ENCODE measurements at regions of chr19 and their contacts with region 1.

Region 1: DNA sequence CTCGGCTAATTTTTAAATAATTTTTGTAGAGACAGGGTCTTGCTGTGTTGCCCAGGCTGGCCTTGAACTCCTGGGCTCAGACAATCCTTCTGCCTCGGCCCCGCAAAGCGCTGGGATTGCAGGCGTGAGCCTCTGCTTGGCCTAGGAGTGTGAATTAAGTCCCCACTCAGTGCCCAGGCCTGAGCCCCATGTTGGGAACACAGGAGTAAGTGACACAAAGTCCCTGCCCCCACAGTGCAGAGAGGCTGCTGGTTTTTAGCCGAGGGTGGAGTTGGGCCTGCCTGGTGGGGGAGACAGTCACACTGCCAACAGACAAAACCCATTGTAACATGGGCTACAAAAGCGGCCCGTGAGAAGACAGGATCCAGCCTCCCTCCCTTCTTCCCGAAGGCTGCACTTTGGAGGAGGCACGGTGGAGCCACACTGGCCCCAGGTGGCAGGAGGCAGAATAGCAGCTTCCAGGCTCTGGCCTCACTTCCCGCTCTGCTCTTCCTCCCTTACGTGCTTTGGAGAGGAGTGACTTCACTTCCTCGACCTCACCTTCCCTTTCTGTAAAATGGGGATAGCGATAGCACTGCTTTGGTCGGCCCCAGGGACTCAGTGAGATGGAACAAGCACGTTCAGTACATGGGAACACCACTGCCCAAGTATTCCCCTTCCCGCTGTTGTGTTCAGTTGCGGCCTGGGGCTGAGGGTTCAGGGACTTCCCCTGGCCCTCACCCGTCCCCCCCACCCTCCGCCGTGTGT is 15.2 kb upstream of the EHD2 start:
- DNase-seq: peak; percentile 69 to 87 (median 77)
- ATAC-seq: peak; percentile 65 to 86 (median 84)
- H3K4me3 ChIP-seq: no peak overlapping the region
- H3K27ac ChIP-seq: peak overlapping the region in 6 of 12 donors; percentile 20 to 76 (median 43)
- H3K4me1 ChIP-seq: peaks cover 0 to 8% (median 4%) of the 10 kb centered on the region in 12 donors
- H3K27me3 ChIP-seq: no peaks in the 10 kb centered on the region
- CTCF ChIP-seq: peak; percentile 93 to 99 (median 97)
- POLR2A ChIP-seq: no peak

Region 2: DNA sequence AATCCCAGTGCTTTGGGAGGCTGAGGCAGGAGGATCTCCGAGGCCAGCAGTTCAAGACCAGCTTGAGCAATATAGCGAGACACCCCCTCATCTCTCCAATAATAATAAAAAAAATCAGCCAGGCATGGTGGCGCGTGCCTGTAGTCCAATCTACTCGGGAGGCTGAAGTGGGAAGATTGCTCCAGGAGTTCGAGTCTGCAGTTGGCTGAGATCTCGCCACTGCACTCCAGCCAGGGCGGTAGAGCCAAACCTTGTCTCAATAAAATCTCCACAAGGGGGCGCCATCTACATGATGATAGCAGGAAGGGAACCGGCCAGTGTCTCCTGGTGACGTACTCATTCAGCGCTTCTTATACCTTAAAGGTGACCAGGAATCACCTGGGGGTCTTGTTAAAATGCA is 402.0 kb before region 1 on chr19:
- intact Hi-C with region 1: loop called in 3 of 10 experiments (anchors 10 kb)
- DNase-seq: peak in 4 of 5 donors; percentile 67 to 76 (median 72)
- ATAC-seq: peak in 3 of 4 donors; percentile 87 to 88 (median 88)
- H3K4me3 ChIP-seq: no peak overlapping the region
- H3K27ac ChIP-seq: no peak overlapping the region
- H3K4me1 ChIP-seq: no peaks in the 10 kb centered on the region
- H3K27me3 ChIP-seq: no peaks in the 10 kb centered on the region
- CTCF ChIP-seq: peak; percentile 66 to 79 (median 74)
- POLR2A ChIP-seq: no peak

Region 3: GRCh38 chr19:47436712-47437401 is 261.2 kb before region 1 on chr19:
- intact Hi-C with region 1: loop called (anchors 1 to 5 kb)
- DNase-seq: peak; percentile 64 to 83 (median 75)
- ATAC-seq: peak; percentile 74 to 93 (median 90)
- H3K4me3 ChIP-seq: no peak overlapping the region
- H3K27ac ChIP-seq: no peak overlapping the region
- H3K4me1 ChIP-seq: peaks cover 0 to 3% (median 0%) of the 10 kb centered on the region in 12 donors
- H3K27me3 ChIP-seq: peaks cover 0 to 76% (median 30%) of the 10 kb centered on the region in 9 donors
- CTCF ChIP-seq: peak; percentile 76 to 94 (median 85)
- POLR2A ChIP-seq: peak in 1 of 2 donors; percentile 16

Region 4: GRCh38 chr19:47514869-47515588 is 183.0 kb before region 1 on chr19 and contains the start of gene NAPA:
- intact Hi-C with region 1: loop called in 9 of 10 experiments (anchors 1 to 10 kb)
- DNase-seq: peak; percentile 100
- ATAC-seq: peak; percentile 98 to 99 (median 98)
- H3K4me3 ChIP-seq: peak within 1 kb of the TSS; percentile 66 to 99 (median 92)
- H3K27ac ChIP-seq: peak within 1 kb of the TSS; percentile 86 to 99 (median 95)
- H3K4me1 ChIP-seq: peaks cover 17 to 51% (median 42%) of the 10 kb centered on the region in 12 donors
- H3K27me3 ChIP-seq: no peaks in the 10 kb centered on the region
- CTCF ChIP-seq: peak in 1 of 12 donors; percentile 97
- POLR2A ChIP-seq: peak; percentile 72 to 90
- total RNA-seq, gene NAPA: 113 to 238 (median 125) TPM

Region 5: DNA sequence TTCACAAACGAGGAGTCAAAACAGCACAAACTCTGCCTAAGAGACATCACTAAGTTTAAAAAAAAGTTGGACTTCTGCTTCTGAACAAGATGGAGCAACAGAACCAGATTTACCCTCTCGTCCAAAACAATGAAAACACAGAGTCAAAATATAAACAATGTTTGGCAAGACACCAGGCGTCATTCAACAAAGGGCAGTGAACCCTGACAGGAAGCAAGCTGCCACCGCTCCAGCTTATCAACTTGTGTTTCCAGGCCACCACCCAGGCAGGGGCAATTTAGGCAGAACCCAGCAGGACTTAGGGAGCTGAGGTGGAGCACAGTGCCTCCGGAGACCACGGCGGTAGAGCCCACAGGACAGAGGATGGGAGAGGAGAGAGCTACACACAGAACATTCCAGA is 174.6 kb before region 1 on chr19:
- intact Hi-C with region 1: loop called in 6 of 10 experiments (anchors 5 to 10 kb)
- DNase-seq: peak in 2 of 5 donors; percentile 56 to 61
- ATAC-seq: peak in 3 of 4 donors; percentile 42 to 63 (median 48)
- H3K4me3 ChIP-seq: no peak overlapping the region
- H3K27ac ChIP-seq: peak overlapping the region in 11 of 12 donors; percentile 10 to 70 (median 46)
- H3K4me1 ChIP-seq: peaks cover 0 to 30% (median 13%) of the 10 kb centered on the region in 12 donors
- H3K27me3 ChIP-seq: peaks cover 0 to 7% (median 0%) of the 10 kb centered on the region in 9 donors
- CTCF ChIP-seq: no peak
- POLR2A ChIP-seq: no peak

Region 6: GRCh38 chr19:47600246-47601179 is 97.5 kb before region 1 on chr19:
- intact Hi-C with region 1: loop called in 4 of 10 experiments (anchors 5 to 10 kb)
- DNase-seq: peak; percentile 100
- ATAC-seq: peak; percentile 98 to 99 (median 99)
- H3K4me3 ChIP-seq: peak overlapping the region; percentile 20 to 76 (median 67)
- H3K27ac ChIP-seq: peak overlapping the region; percentile 41 to 95 (median 85)
- H3K4me1 ChIP-seq: peaks cover 0 to 35% (median 18%) of the 10 kb centered on the region in 12 donors
- H3K27me3 ChIP-seq: no peaks in the 10 kb centered on the region
- CTCF ChIP-seq: peak in 3 of 12 donors; percentile 4 to 6 (median 6)
- POLR2A ChIP-seq: peak; percentile 24 to 93

Region 7: DNA sequence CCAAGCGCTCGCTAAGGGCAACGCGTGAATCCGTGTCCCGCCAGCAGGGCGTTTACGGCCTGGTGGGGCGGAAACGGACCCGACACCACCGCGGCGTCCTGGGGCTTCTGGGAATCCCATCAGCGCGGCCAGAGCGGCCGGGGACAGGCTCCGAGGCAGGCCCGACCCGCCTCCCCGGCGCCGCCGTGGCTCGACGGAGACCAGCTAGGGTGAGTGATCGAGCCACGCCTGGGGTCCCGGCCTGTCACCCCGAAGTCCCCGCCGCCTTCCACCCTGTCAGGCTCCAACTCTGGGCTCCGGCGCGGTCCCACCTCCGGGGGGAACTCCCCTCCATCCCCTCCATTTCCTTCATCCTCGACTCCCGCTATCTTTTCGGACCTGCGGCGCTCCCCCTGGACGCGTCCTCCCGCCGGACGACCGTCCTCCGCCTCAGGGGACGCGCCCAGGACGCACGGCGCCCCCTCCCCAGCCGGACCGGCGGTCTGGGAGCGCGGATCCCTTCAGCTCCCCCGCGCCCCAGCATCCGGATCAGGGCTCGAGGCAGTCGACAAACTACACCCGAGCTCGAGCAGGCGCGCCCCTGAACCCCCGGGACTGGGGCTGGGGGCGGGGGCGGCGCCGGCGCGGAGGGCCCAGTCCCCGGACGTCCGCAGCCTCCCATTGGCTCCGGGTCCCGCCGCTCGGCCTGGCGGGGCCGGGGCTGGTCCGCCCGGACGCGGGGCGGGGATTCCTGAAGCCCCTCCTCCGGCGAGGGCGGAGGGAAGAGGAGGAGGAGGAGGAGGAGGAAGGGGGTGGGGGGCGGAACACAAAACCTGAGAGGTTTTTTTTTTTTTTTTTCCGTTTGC is 89.7 kb before region 1 on chr19:
- intact Hi-C with region 1: loop called in 7 of 10 experiments (anchors 2 to 10 kb)
- DNase-seq: peak; percentile 95 to 97 (median 96)
- ATAC-seq: peak; percentile 92 to 95 (median 94)
- H3K4me3 ChIP-seq: peak overlapping the region; percentile 86 to 100 (median 98)
- H3K27ac ChIP-seq: peak overlapping the region; percentile 96 to 100 (median 99)
- H3K4me1 ChIP-seq: peaks cover 2 to 48% (median 30%) of the 10 kb centered on the region in 12 donors
- H3K27me3 ChIP-seq: no peaks in the 10 kb centered on the region
- CTCF ChIP-seq: peak in 7 of 12 donors; percentile 16 to 43 (median 30)
- POLR2A ChIP-seq: peak in 1 of 2 donors; percentile 88

Region 8: GRCh38 chr19:47765523-47766358 is 67.7 kb after region 1 on chr19:
- intact Hi-C with region 1: no loop called
- DNase-seq: peak; percentile 67 to 87 (median 76)
- ATAC-seq: peak; percentile 69 to 75 (median 74)
- H3K4me3 ChIP-seq: no peak overlapping the region
- H3K27ac ChIP-seq: no peak overlapping the region
- H3K4me1 ChIP-seq: peaks cover 0 to 19% (median 3%) of the 10 kb centered on the region in 12 donors
- H3K27me3 ChIP-seq: no peaks in the 10 kb centered on the region
- CTCF ChIP-seq: peak; percentile 72 to 89 (median 82)
- POLR2A ChIP-seq: no peak

Measured in heart left ventricle (tissue), 16 donors.